ENCODE measurements at regions of chr5 and their contacts with region 1.

Region 1: GRCh38 chr5:172188033-172188892 is at the start of gene STK10:
- DNase-seq: peak; percentile 96

Region 2: DNA sequence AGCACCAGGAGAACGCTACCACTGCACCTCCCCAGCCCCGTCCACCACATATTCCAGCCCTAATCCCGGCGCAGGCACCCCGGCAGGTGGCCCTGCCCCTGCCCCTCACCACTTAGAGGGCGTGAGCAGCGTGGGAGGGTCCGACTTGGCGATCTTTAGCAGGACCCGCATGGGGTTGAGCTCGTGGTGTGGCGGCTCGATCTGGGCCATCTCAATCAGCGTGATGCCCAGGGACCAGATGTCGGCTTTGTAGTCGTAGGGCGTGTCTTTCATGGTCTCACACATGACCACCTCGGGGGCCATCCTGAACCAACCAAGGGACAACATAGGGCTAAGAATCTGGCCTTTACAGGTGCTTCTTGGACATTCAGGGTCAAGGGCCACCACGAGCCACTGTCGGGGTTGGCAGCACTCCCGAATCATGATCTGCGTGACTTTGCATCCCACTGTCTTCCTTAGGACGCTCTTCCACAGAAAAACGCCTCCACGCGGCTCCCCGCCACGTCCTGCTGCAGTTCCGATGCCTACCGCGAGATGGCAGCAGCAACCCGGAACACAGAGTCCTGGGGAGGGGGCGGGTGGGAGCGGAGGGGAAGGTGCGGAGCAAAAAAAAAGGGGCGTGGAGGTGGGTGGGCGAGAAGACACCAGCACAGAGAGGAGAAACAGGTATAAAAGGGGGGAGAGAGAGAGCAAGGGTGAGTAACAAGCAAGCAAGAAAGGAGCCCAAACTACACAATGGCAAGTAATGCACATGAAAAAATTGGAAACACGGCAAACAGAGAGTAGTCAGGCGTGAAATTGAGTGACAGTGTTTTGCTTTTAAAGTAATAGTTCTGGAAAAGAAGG is 81.5 kb before region 1 on chr5:
- CTCF ChIA-PET with region 1: interaction called, 10 read pairs
- POLR2A ChIA-PET with region 1: no interaction called
- DNase-seq: peak; percentile 85

Region 3: DNA sequence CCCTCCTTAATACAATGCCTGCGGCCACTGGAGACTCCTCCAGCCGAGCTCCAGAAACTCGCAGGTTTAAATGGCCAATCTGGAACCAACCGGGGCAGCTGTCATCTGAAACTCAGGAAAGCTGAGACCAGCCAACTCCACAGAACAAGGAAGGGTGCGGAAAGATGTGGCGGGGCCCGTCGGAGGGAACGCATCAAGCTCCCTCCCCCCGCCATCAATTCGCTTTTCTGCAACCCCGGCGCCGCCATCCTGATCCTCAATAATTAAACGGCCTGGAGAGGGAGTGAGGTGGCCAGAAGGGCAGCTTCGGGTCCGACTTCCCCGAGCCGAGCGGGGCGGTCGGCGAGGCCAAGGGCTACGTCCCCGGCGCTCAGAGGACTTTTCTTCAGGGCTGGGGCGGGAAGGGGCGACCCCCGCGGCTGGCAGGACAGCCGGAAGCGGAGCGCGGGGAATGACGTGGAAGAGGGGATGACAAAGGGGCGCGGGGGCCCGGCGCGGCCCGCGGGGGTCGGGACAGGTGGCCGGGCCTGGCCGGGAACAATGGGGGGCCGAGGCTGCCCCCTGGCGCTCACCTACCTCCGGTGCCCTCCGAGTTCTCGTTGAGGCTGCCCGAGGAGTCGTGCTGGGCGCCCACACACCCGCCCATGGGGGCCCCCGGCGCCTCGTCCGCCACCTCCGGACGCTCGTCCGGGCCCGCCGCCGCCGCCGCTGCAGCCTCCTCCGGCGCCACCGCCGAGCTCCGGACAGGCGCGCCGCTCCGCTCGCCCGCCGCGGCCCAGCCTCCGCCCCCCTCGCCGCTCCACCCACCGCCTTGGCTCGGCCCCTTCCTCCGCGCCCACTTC is 95.0 kb after region 1 on chr5 and contains the start of gene UBTD2:
- CTCF ChIA-PET with region 1: interaction called, 8 read pairs
- POLR2A ChIA-PET with region 1: interaction called, 20 read pairs
- DNase-seq: peak; percentile 89